Calu3 (cell line): ENCODE measurements at regions of chr1 and their contacts with region 1.

Region 1: GRCh38 chr1:150629115-150629928 is at the start of gene ENSA:
- DNase-seq: peak; percentile 98
- H3K4me3 Mint-ChIP-seq: no peak within 1 kb of the TSS
- H3K27ac Mint-ChIP-seq: no peak within 1 kb of the TSS
- H3K4me1 Mint-ChIP-seq: peaks cover 23% of the 10 kb centered on the region
- H3K27me3 Mint-ChIP-seq: no peaks in the 10 kb centered on the region
- CTCF ChIP-seq: no peak
- total RNA-seq, gene ENSA: 253 and 276 TPM in 2 replicates

Region 2: DNA sequence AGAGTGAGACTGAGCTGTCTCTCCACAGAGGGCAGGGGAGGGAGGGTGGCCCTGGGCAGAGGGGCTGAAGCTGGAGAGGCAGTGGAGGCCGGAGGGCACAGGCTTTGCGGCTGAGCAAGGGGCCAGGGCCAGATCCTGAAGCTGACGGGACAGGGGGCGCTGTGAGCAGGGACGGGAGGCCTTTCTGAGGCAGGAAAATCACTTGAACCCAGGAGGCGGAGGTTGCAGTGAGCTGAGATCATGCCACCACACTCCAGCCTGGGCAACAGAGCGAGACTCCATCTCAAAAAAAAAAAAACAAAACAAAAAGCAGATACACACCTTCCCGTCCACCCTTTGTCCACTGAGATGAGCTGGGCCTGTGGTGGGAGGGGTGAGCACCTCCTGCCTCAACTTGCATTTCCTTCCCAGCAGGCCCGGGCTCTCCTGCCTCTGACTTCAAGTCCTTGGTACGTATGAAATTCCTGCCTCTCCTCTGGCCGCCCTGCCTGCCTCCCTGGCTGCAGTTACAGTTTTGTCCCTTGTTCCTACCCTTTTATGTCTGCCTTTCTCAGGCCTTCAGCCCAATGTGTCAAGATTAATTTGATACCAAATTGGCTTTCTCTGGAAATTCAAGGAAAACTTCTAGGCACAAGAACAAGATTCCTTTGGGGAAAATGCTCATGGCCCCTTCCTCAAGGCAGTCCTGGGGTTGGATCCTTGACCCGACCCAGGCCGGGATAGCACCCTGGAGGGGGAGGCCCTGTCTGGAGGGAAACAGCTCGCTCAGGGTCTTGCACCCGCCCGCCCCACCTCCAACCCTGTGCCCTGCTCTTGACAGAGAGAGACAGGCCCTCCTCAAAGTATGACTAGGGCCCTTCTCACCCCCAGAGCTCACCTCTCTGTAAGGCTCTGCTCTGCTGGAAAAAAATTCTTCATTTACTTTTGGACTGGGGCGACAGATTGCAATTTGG is 91.3 kb before region 1 on chr1:
- CTCF ChIA-PET with region 1: no interaction called
- intact Hi-C with region 1: no loop called
- DNase-seq: no peak
- H3K4me3 Mint-ChIP-seq: no peak overlapping the region
- H3K27ac Mint-ChIP-seq: no peak overlapping the region
- H3K4me1 Mint-ChIP-seq: peaks cover 27% of the 10 kb centered on the region
- H3K27me3 Mint-ChIP-seq: no peaks in the 10 kb centered on the region
- CTCF ChIP-seq: no peak

Region 3: DNA sequence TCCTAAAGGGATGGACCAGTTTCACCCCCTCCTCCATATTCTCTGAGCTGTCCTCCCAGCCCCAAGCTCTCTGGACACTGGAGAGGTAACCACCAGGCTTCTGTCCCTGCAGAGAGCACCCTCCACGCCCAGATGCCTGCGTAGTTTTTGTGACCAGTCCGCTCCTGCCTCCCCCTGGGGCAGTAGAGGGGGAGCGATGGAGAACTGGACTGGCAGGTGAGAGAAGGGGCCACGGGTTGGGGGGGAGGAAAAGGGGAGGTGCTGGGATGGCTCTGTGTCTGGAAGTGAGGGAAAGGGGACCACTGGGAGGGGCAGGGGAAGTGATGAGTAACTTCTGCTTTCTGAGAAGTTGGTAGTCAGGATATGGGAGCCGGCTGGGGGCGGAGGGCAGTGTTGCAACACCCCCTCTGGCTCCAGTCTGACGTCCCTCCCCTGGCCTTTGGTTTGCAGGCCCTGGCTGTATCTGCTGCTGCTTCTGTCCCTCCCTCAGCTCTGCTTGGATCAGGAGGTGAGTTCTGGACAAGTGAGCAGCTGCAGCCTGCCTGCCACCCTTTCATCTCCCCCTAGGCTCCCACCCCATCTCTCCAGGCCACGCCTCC is 77.1 kb before region 1 on chr1:
- CTCF ChIA-PET with region 1: no interaction called
- intact Hi-C with region 1: no loop called
- DNase-seq: peak; percentile 59
- H3K4me3 Mint-ChIP-seq: peak overlapping the region; percentile 30
- H3K27ac Mint-ChIP-seq: peak overlapping the region; percentile 33
- H3K4me1 Mint-ChIP-seq: peaks cover 22% of the 10 kb centered on the region
- H3K27me3 Mint-ChIP-seq: peaks cover 14% of the 10 kb centered on the region
- CTCF ChIP-seq: no peak

Region 4: GRCh38 chr1:150661156-150661555 is 31.8 kb after region 1 on chr1:
- CTCF ChIA-PET with region 1: no interaction called
- intact Hi-C with region 1: loop called (anchors 5 kb)
- DNase-seq: no peak
- H3K4me3 Mint-ChIP-seq: no peak overlapping the region
- H3K27ac Mint-ChIP-seq: no peak overlapping the region
- H3K4me1 Mint-ChIP-seq: peaks cover 19% of the 10 kb centered on the region
- H3K27me3 Mint-ChIP-seq: no peaks in the 10 kb centered on the region
- CTCF ChIP-seq: no peak

Region 5: DNA sequence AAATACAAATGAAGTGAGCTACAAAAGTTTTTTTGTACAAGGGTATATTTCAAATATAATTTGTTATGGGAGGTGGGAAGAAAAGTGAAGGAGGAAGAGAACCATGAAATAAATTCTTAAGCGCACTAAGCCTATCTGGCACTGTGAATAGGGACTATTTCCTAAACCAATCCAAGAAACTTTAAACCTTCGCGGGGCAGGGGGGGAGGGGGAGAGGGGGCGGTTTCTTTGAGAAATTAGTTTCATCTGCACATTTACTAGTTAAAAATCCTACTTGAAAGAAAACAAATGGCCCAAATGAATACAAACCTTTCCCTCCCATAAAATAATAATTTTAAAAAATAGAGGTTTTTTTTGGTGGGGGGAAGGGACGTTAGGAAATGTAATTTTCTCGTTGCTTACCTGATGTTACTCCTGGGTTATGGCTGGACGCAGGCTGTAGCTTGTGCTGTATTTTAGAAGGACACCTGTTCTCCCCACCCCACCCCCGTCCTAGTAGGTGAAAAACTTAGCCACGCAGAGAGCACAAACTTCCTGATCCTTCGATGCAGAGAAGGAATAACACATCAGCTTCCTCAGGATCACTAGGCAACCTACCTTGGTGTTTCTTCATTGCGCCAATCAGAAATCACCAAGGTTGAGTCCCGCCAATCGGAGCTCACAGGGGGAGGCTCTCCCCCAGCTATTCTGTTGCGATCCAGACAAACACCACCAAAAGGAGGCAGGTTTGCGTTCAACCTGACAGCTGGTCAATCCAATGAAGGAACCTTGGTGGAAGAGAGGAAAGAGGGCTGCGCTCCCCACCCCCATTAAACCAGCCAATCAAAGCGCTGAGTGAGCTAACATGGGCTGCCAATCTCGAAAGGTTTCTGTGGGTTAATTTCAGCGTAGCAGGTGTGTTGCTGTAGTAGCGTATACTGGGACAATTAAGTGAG is 67.5 kb after region 1 on chr1 and contains the start of gene GOLPH3L:
- CTCF ChIA-PET with region 1: interaction called, 12 read pairs
- intact Hi-C with region 1: loop called (anchors 10 kb)
- DNase-seq: peak; percentile 97
- H3K4me3 Mint-ChIP-seq: peak within 1 kb of the TSS; percentile 74
- H3K27ac Mint-ChIP-seq: peak within 1 kb of the TSS; percentile 63
- H3K4me1 Mint-ChIP-seq: peaks cover 12% of the 10 kb centered on the region
- H3K27me3 Mint-ChIP-seq: no peaks in the 10 kb centered on the region
- CTCF ChIP-seq: no peak
- total RNA-seq, gene GOLPH3L: 64.7 and 71.6 TPM in 2 replicates